Psoas muscle (tissue), 8 donors: ENCODE measurements at regions of chr18 and their contacts with region 1.

Region 1: GRCh38 chr18:58501066-58501896 is 127.6 kb downstream of the ALPK2 start:
- DNase-seq: no peak
- ATAC-seq: no peak
- H3K4me3 ChIP-seq: no peak overlapping the region
- H3K27ac ChIP-seq: no peak overlapping the region
- H3K4me1 ChIP-seq: no peaks in the 10 kb centered on the region
- H3K27me3 ChIP-seq: no peaks in the 10 kb centered on the region
- CTCF ChIP-seq: no peak

Region 2: GRCh38 chr18:58288922-58289797 is 212.1 kb before region 1 on chr18:
- intact Hi-C with region 1: no loop called
- DNase-seq: no peak
- ATAC-seq: peak; percentile 69 to 90 (median 82)
- H3K4me3 ChIP-seq: no peak overlapping the region
- H3K27ac ChIP-seq: peak overlapping the region; percentile 39
- H3K4me1 ChIP-seq: peaks cover 56% of the 10 kb centered on the region
- H3K27me3 ChIP-seq: no peaks in the 10 kb centered on the region
- CTCF ChIP-seq: no peak

Region 3: DNA sequence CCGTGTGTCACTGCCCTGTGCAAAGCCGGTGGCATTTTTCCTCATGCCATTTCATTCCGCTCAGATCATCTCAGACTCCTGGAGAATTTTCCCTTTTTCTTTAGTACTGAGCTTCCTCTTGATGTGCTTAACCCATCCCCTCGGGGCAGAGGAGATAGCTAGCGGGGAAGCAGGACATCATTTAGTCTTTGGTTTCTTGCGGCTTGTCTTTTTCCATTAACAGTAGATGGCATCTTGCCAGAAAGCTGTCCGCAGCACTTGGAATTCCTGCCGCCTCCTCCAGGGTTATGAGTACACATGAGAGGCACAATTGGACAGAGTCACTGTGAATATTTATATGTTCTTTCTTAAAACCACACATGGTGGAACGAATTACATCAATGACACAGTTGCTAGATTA is 99.0 kb before region 1 on chr18:
- intact Hi-C with region 1: no loop called
- DNase-seq: no peak
- ATAC-seq: peak in 3 of 4 donors; percentile 41 to 50 (median 42)
- H3K4me3 ChIP-seq: no peak overlapping the region
- H3K27ac ChIP-seq: no peak overlapping the region
- H3K4me1 ChIP-seq: peaks cover 13% of the 10 kb centered on the region
- H3K27me3 ChIP-seq: no peaks in the 10 kb centered on the region
- CTCF ChIP-seq: no peak

Region 4: GRCh38 chr18:59085797-59086196 is 584.5 kb after region 1 on chr18:
- intact Hi-C with region 1: loop called in 1 of 2 experiments (anchors 10 kb)
- DNase-seq: no peak
- ATAC-seq: no peak
- H3K4me3 ChIP-seq: no peak overlapping the region
- H3K27ac ChIP-seq: no peak overlapping the region
- H3K4me1 ChIP-seq: no peaks in the 10 kb centered on the region
- H3K27me3 ChIP-seq: no peaks in the 10 kb centered on the region
- CTCF ChIP-seq: no peak